ENCODE measurements at regions of chr12 and their contacts with region 1.

Region 1: GRCh38 chr12:32106517-32107358 is at the start of gene BICD1:
- DNase-seq: peak; percentile 96 to 98
- H3K4me3 ChIP-seq: peak within 1 kb of the TSS; percentile 91
- H3K4me3 Mint-ChIP-seq: peak within 1 kb of the TSS; percentile 82
- H3K27ac Mint-ChIP-seq: peak within 1 kb of the TSS; percentile 58
- H3K4me1 ChIP-seq: peaks cover 26% of the 10 kb centered on the region
- H3K4me1 Mint-ChIP-seq: peaks cover 25% of the 10 kb centered on the region
- H3K27me3 ChIP-seq: no peaks in the 10 kb centered on the region
- H3K27me3 Mint-ChIP-seq: no peaks in the 10 kb centered on the region
- CTCF ChIP-seq: peak; percentile 37 to 69
- total RNA-seq, gene BICD1: 36.2 and 38.8 TPM in 2 replicates

Region 2: DNA sequence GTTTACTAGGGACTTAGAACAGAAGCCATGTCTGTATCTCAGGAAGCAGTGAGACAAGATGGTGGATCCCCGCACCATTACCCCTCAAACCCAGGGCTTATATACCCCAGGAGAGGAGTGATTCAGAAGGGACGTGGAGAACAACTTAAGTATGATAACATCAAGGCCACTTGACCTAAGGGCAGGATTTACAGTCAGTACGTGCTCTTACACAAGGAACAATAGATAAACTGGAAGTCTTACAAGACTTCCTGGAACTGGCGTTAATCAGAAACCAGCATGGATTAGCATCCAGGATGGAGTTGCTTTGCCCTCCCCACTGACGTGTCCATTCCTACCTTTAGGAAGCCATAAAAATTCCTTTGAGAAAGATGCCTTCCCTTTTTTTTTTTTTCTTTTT is 455.8 kb before region 1 on chr12:
- CTCF ChIA-PET with region 1: interaction called, 10 read pairs
- POLR2A ChIA-PET with region 1: interaction called, 4 read pairs
- intact Hi-C with region 1: loop called (anchors 1 kb)
- DNase-seq: peak; percentile 82 to 90
- H3K4me3 ChIP-seq: no peak overlapping the region
- H3K4me3 Mint-ChIP-seq: peak overlapping the region; percentile 38
- H3K27ac Mint-ChIP-seq: peak overlapping the region; percentile 95
- H3K4me1 ChIP-seq: peaks cover 30% of the 10 kb centered on the region
- H3K4me1 Mint-ChIP-seq: peaks cover 25% of the 10 kb centered on the region
- H3K27me3 ChIP-seq: no peaks in the 10 kb centered on the region
- H3K27me3 Mint-ChIP-seq: no peaks in the 10 kb centered on the region
- CTCF ChIP-seq: no peak

Region 3: DNA sequence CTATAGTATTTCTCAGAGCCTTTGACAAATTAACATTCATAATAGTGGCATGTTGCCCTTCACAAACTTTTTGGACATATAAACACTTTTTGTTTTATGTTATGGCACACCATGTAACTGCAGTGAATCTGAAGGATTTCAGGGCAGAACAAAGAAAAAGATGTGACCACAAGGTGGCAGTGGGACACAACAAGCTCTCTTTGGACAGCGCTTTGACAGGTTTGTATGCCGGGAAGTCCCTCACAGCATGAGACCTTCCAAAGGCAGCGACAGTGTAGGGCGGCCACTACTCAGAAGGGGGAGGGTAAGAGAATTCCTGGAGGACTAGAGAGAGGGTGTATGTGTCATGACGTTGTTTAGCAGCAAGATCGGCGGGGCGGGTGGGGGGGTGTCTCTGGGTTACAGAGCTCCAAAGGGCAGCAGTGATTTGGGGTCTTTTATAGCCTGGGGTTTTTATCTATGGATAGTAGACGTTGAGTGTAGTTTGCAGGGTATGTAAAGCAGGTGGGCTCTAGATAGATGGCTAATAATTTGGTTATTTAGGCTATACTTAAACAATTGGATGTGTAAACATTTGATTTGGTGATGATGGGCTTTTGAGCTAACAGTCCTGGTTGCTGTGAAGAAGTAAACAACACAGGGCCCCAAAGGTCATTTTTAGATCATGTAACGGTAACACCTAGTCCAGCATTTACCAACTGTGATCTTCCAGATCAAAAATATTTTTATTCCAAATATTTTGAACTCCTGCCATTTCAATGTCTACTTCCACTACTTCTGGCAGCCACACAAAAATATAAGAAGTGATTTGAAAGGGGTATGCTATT is 424.4 kb before region 1 on chr12:
- CTCF ChIA-PET with region 1: no interaction called
- POLR2A ChIA-PET with region 1: no interaction called
- intact Hi-C with region 1: loop called (anchors 1 kb)
- DNase-seq: peak; percentile 85 to 86
- H3K4me3 ChIP-seq: no peak overlapping the region
- H3K4me3 Mint-ChIP-seq: no peak overlapping the region
- H3K27ac Mint-ChIP-seq: no peak overlapping the region
- H3K4me1 ChIP-seq: no peaks in the 10 kb centered on the region; the same call in 1 of the 2 replicates
- H3K4me1 Mint-ChIP-seq: peaks cover 14% of the 10 kb centered on the region
- H3K27me3 ChIP-seq: no peaks in the 10 kb centered on the region
- H3K27me3 Mint-ChIP-seq: no peaks in the 10 kb centered on the region
- CTCF ChIP-seq: peak; percentile 78 to 94

Region 4: DNA sequence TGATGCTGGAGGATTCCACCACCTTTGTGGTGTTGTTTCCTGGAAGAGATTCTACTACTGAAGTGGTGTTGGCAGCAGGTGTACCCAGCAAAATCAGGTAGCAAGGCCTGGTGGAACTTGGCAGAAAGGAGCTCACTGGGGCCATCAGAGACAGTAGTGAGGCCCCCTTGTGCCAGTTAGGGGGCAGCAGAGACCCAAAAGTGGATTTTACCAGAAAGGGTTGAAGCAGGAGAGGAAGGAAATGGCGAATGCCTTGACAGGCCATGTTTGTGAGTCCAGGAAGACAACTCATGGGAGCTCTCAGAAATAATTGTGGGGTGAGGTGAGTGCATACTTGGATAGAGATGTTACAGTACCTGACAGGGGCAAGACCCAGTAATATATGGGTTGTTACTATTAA is 154.9 kb after region 1 on chr12:
- CTCF ChIA-PET with region 1: no interaction called
- POLR2A ChIA-PET with region 1: no interaction called
- intact Hi-C with region 1: loop called (anchors 2 kb)
- DNase-seq: peak; percentile 46 to 49
- H3K4me3 ChIP-seq: no peak overlapping the region
- H3K4me3 Mint-ChIP-seq: no peak overlapping the region
- H3K27ac Mint-ChIP-seq: no peak overlapping the region
- H3K4me1 ChIP-seq: peaks cover 7% of the 10 kb centered on the region; the same call in 1 of the 2 replicates
- H3K4me1 Mint-ChIP-seq: peaks cover 29% of the 10 kb centered on the region
- H3K27me3 ChIP-seq: no peaks in the 10 kb centered on the region
- H3K27me3 Mint-ChIP-seq: no peaks in the 10 kb centered on the region
- CTCF ChIP-seq: peak; percentile 24 to 39

Region 5: GRCh38 chr12:32679091-32679919 is 572.6 kb after region 1 on chr12 and contains the start of gene DNM1L:
- CTCF ChIA-PET with region 1: no interaction called
- POLR2A ChIA-PET with region 1: no interaction called
- intact Hi-C with region 1: loop called (anchors 5 kb)
- DNase-seq: peak; percentile 99
- H3K4me3 ChIP-seq: peak within 1 kb of the TSS; percentile 86
- H3K4me3 Mint-ChIP-seq: peak within 1 kb of the TSS; percentile 97
- H3K27ac Mint-ChIP-seq: peak within 1 kb of the TSS; percentile 95
- H3K4me1 ChIP-seq: peaks cover 22% of the 10 kb centered on the region
- H3K4me1 Mint-ChIP-seq: peaks cover 19% of the 10 kb centered on the region
- H3K27me3 ChIP-seq: no peaks in the 10 kb centered on the region
- H3K27me3 Mint-ChIP-seq: no peaks in the 10 kb centered on the region
- CTCF ChIP-seq: peak in 1 of 2 experiments; percentile 18
- total RNA-seq, gene DNM1L: 136 and 137 TPM in 2 replicates